Activated T-helper 1 cell treated with anti-CD3 and anti-CD28 coated beads, Interleukin-12 subunit alpha, Interleukin-12 subunit beta, Interleukin-2, Interleukin-4 antibody, amounts not matched to agents 30 ng/mL and 10 ng/mL and 1 ng/mL, durations not matched to agents 14 hours and 24 hours and 36 hours (primary cell): ENCODE measurements at regions of chr7 and their contacts with region 1.

Region 1: DNA sequence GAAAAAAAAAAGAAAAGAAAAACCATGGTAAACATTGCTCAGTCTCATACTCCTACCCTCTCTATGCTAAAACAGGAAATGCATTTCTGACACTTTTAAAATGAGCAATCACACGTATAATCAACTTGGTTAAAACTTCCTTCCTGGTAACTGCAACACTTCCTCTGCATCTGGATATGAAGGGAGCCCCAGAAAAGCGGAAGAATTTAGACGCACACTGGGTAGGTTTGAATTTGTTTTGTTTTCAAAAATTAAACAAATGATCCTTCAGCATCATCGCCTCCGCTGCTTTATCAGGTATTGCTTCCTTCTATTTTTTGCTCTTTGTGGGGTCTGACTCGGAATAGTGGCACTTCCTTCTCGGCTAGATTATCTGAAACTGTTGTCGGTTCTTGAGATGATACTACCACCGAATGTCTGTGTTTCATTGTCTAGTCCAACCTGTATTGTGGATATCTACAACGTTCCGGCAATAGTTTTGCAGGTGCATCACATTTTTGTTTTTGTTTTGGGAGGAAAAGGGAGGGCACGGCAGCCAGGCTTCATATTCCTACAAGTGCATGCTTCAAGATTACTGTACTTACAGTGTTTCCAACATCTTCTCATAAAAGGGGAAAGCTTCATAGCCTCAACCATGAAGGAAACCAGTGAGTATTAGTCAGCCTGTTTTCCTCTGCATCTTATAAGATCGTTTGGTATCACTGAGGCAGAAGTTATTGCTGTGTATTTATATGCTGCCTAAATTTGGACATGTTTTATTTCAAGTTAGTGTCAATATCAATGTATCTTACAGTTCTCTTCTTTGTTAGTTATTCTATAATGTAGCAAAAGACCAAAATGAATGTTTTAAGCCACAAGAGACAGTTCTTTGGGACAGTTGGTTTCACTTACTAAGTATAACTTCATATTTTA is at the start of gene PIK3CG:
- DNase-seq: peak; percentile 22
- H3K4me3 Mint-ChIP-seq: peak within 1 kb of the TSS; percentile 96
- H3K27ac Mint-ChIP-seq: peak within 1 kb of the TSS; percentile 90
- H3K4me1 Mint-ChIP-seq: peaks cover 55% of the 10 kb centered on the region
- H3K27me3 Mint-ChIP-seq: no peaks in the 10 kb centered on the region
- total RNA-seq, gene PIK3CG: 38.7 and 39.3 TPM in 2 replicates

Region 2: DNA sequence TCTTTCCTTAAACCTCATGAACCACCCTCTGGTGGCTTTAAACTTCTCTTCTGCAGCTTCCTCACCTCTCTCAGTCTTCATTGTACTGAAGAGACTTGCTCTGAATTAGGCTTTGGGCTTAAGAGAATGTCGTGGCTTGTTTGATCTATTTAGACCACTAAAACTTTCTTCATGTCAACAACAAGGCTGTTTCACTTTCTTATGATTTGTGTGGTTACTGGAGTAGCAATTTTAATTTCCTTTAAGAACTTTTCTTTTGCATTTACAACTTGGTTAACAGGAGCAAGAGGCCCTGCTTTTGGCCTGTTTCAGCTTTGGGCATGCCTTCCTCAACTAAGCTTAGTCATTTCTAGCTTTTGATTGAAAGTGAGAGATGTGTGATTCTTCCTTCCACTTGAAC is 940.4 kb before region 1 on chr7:
- intact Hi-C with region 1: loop called (anchors 5 kb)
- DNase-seq: no peak
- H3K4me3 Mint-ChIP-seq: no peak overlapping the region
- H3K27ac Mint-ChIP-seq: peak overlapping the region; percentile 56
- H3K4me1 Mint-ChIP-seq: peaks cover 18% of the 10 kb centered on the region
- H3K27me3 Mint-ChIP-seq: peaks cover 12% of the 10 kb centered on the region

Region 3: DNA sequence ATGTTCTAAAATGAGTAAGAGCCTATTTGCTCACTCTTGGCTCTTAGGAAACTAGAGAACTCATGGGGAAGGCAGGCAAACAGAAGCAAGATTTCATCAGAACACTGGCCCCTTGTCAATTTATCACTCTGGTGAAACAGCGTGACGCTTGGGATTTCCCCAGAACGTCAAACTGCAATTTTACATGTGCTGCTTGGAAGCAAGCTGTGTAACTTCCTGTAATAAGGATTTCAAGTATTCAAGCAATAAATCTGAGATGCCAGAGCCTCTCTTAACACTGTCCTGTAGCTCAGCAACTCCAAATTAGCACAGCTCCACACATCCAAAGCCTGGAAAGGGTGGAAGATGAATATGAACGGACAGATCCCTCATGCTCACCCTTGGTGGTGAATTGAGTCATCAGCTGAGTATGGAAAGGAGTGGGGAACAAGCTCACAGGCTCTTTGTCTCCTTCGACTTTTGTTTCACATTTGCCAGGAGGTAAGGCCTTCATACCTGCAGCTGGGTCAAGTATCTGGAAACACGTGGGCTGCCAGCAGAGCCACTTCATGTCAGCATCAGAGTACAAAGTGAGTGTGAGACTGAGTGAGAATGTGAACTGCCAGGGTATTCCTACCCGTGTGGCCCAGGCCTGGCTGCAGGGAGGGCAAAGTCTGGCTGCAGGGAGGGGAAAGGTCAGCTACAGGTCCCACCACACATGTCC is 440.2 kb before region 1 on chr7:
- intact Hi-C with region 1: loop called (anchors 5 kb)
- DNase-seq: peak; percentile 67
- H3K4me3 Mint-ChIP-seq: peak overlapping the region; percentile 67
- H3K27ac Mint-ChIP-seq: peak overlapping the region; percentile 97
- H3K4me1 Mint-ChIP-seq: peaks cover 91% of the 10 kb centered on the region
- H3K27me3 Mint-ChIP-seq: no peaks in the 10 kb centered on the region

Region 4: DNA sequence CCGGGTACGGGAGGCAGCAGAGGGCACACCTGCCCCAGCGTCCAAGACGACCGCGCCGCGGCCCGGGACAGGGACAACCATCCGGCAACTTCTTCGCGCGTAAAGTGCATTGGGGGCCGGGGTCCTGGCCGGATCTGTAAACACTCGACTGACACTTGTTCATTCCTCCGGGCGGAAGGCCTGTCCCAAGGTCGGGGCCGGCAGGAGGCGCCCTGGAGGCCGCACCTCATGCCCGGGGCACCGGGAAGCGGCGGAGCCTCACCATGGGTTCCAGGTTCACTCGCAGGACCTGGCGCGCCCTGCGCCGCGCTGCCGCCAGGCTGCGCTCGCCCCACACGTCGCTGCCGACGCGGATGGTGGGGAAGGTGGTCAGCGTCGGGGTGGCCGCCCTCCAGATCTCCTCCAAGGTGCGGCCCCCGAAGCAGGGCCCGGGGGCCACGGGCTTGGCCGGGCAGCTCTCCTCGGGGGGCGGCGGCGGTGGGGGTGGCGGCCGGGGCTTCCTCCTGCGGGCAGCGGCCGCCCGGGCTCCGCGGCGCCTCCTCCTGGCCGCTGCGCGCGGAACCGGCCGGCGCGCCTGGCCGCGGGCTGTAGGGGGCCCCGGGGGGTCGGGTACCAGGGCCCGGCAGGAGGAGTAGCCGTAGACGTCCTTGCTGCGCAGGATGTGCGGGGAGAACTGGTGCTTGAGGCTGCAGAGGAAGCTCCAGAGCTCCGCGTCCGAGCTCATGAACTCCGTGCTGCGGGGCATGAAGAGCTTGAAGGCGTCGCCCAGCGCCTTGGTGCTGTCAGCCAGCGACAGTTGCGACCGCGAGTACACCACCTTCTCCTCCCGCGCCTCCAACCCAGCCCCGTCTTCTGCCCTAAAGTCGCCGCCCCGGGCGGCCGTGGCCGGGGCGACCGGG is 205.2 kb before region 1 on chr7:
- intact Hi-C with region 1: loop called (anchors 1 kb)
- DNase-seq: peak; percentile 73
- H3K4me3 Mint-ChIP-seq: peak overlapping the region; percentile 94
- H3K27ac Mint-ChIP-seq: peak overlapping the region; percentile 92
- H3K4me1 Mint-ChIP-seq: peaks cover 32% of the 10 kb centered on the region
- H3K27me3 Mint-ChIP-seq: peaks cover 3% of the 10 kb centered on the region

Region 5: GRCh38 chr7:106772655-106773108 is 92.7 kb before region 1 on chr7:
- intact Hi-C with region 1: loop called (anchors 1 kb)
- DNase-seq: no peak
- H3K4me3 Mint-ChIP-seq: peak overlapping the region; percentile 47
- H3K27ac Mint-ChIP-seq: peak overlapping the region; percentile 98
- H3K4me1 Mint-ChIP-seq: peaks cover 63% of the 10 kb centered on the region
- H3K27me3 Mint-ChIP-seq: no peaks in the 10 kb centered on the region

Region 6: GRCh38 chr7:106783286-106783685 is 82.1 kb before region 1 on chr7:
- intact Hi-C with region 1: no loop called
- DNase-seq: no peak
- H3K4me3 Mint-ChIP-seq: no peak overlapping the region
- H3K27ac Mint-ChIP-seq: no peak overlapping the region
- H3K4me1 Mint-ChIP-seq: no peaks in the 10 kb centered on the region
- H3K27me3 Mint-ChIP-seq: peaks cover 5% of the 10 kb centered on the region

Region 7: DNA sequence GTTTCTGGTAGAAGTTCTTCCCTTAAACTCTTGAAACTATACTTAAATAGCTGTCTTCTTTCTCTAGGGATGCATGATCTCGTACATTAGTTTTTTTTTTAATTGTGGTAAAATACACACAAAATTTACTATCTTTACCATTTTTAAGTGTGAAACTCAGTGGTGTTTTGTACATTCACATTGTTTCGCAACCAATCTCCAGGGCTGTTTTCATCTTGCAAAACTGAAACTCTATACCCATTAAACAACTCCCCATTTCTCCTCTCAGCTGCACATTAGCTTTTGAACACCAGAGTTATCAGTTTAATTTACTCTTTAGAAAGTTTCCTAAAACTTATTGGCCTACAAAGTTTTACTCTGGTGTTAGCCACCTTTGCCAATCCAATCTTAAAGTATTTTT is 133.6 kb after region 1 on chr7:
- intact Hi-C with region 1: no loop called
- DNase-seq: no peak
- H3K4me3 Mint-ChIP-seq: no peak overlapping the region
- H3K27ac Mint-ChIP-seq: no peak overlapping the region
- H3K4me1 Mint-ChIP-seq: no peaks in the 10 kb centered on the region
- H3K27me3 Mint-ChIP-seq: peaks cover 4% of the 10 kb centered on the region

Region 8: GRCh38 chr7:107044347-107045194 is 179.2 kb after region 1 on chr7 and contains the start of gene PRKAR2B:
- intact Hi-C with region 1: loop called (anchors 5 kb)
- DNase-seq: peak; percentile 67
- H3K4me3 Mint-ChIP-seq: peak within 1 kb of the TSS; percentile 88
- H3K27ac Mint-ChIP-seq: peak within 1 kb of the TSS; percentile 53
- H3K4me1 Mint-ChIP-seq: peaks cover 13% of the 10 kb centered on the region
- H3K27me3 Mint-ChIP-seq: peaks cover 43% of the 10 kb centered on the region
- total RNA-seq, gene PRKAR2B: 0.42 and 1.0 TPM in 2 replicates

Region 9: GRCh38 chr7:107563775-107564552 is 698.6 kb after region 1 on chr7 and contains the starts of genes COG5 and DUS4L:
- intact Hi-C with region 1: loop called (anchors 5 kb)
- DNase-seq: peak; percentile 75
- H3K4me3 Mint-ChIP-seq: peak within 1 kb of the TSS; percentile 89
- H3K27ac Mint-ChIP-seq: peak within 1 kb of the TSS; percentile 93
- H3K4me1 Mint-ChIP-seq: peaks cover 62% of the 10 kb centered on the region
- H3K27me3 Mint-ChIP-seq: no peaks in the 10 kb centered on the region
- total RNA-seq, gene COG5: 36.5 and 39.1 TPM in 2 replicates
- total RNA-seq, gene DUS4L: 11.8 and 13.5 TPM in 2 replicates

Region 10: DNA sequence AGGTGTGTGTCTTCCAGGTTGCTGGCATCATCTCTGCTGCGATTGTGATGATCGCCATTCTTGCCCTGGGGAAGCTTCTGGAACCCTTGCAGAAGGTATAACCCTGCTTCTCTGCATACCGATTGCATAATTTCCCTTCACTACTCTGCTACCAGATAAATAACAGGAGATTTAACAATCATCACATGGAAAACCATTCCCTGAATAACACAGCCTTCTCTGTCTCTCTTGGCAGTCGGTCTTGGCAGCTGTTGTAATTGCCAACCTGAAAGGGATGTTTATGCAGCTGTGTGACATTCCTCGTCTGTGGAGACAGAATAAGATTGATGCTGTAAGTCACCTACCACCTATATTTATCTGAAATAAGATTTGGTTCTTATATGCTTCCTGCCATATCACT is 829.0 kb after region 1 on chr7:
- intact Hi-C with region 1: no loop called
- DNase-seq: no peak
- H3K4me3 Mint-ChIP-seq: no peak overlapping the region
- H3K27ac Mint-ChIP-seq: no peak overlapping the region
- H3K4me1 Mint-ChIP-seq: no peaks in the 10 kb centered on the region
- H3K27me3 Mint-ChIP-seq: no peaks in the 10 kb centered on the region